Heart left ventricle (tissue), 16 donors: ENCODE measurements at regions of chr11 and their contacts with region 1.

Region 1: GRCh38 chr11:132402071-132402684 is 1031.8 kb downstream of the NTM start:
- DNase-seq: peak in 4 of 5 donors; percentile 16 to 52 (median 35)
- ATAC-seq: peak; percentile 77 to 93 (median 86)
- H3K4me3 ChIP-seq: no peak overlapping the region
- H3K27ac ChIP-seq: no peak overlapping the region
- H3K4me1 ChIP-seq: no peaks in the 10 kb centered on the region
- H3K27me3 ChIP-seq: peaks cover 0 to 28% (median 0%) of the 10 kb centered on the region in 9 donors
- CTCF ChIP-seq: peak in 11 of 12 donors; percentile 27 to 59 (median 45)
- POLR2A ChIP-seq: no peak

Region 2: GRCh38 chr11:132114185-132114584 is 288.0 kb before region 1 on chr11:
- intact Hi-C with region 1: loop called in 8 of 10 experiments (anchors 1 to 10 kb)
- DNase-seq: peak in 3 of 5 donors; percentile 35 to 52 (median 41)
- ATAC-seq: peak; percentile 44 to 70 (median 66)
- H3K4me3 ChIP-seq: no peak overlapping the region
- H3K27ac ChIP-seq: no peak overlapping the region
- H3K4me1 ChIP-seq: peaks cover 0 to 17% (median 0%) of the 10 kb centered on the region in 12 donors
- H3K27me3 ChIP-seq: peaks cover 0 to 9% (median 0%) of the 10 kb centered on the region in 9 donors
- CTCF ChIP-seq: peak; percentile 25 to 57 (median 45)
- POLR2A ChIP-seq: no peak

Region 3: DNA sequence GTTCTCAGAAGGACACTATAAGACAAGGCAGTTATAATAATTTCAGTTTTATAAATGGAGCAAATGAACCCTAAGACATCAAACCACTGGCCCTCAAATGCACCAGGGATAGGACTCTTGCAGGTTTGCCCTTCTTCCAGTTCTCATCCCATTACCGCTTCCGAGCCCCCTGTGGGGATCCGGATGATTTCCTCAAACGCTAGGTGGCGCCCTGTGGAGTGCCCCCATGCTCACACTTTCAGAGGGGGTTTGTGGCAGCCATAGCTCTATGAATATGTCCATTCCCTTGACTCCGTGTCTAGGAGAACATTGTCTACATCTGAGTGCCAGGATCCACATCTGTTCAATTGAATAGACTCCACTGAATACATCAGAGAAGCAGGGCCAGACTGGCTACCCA is 215.5 kb before region 1 on chr11:
- intact Hi-C with region 1: loop called in 1 of 10 experiments (anchors 10 kb)
- DNase-seq: no peak
- ATAC-seq: no peak
- H3K4me3 ChIP-seq: no peak overlapping the region
- H3K27ac ChIP-seq: no peak overlapping the region
- H3K4me1 ChIP-seq: no peaks in the 10 kb centered on the region
- H3K27me3 ChIP-seq: no peaks in the 10 kb centered on the region
- CTCF ChIP-seq: peak in 8 of 12 donors; percentile 7 to 33 (median 18)
- POLR2A ChIP-seq: no peak

Region 4: DNA sequence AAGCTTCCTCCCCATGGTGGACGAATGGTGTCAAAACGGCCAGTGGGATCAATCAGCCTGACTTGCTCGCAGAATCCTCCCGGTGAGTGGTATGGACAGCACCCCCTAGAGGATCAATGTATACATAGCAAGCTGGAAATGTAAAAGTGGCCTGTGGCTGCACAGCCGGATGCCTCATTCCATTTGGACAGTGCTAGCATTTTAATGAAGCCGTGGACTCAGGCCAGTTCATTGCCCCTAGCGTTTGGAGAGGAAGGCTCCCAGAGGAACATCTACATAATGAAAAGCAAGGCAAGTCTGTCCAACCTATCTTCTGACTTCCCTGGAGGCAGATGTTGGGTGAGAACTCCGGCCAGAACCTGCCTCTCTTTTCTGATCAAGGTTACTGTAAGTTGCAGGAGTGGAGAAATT is 89.5 kb before region 1 on chr11:
- intact Hi-C with region 1: loop called in 1 of 10 experiments (anchors 5 kb)
- DNase-seq: no peak
- ATAC-seq: peak in 2 of 4 donors; percentile 48 to 52
- H3K4me3 ChIP-seq: no peak overlapping the region
- H3K27ac ChIP-seq: no peak overlapping the region
- H3K4me1 ChIP-seq: peaks cover 0 to 7% (median 0%) of the 10 kb centered on the region in 12 donors
- H3K27me3 ChIP-seq: no peaks in the 10 kb centered on the region
- CTCF ChIP-seq: peak; percentile 39 to 67 (median 56)
- POLR2A ChIP-seq: no peak

Region 5: GRCh38 chr11:132504501-132505041 is 102.4 kb after region 1 on chr11:
- intact Hi-C with region 1: no loop called
- DNase-seq: no peak
- ATAC-seq: no peak
- H3K4me3 ChIP-seq: no peak overlapping the region
- H3K27ac ChIP-seq: no peak overlapping the region
- H3K4me1 ChIP-seq: no peaks in the 10 kb centered on the region
- H3K27me3 ChIP-seq: peaks cover 0 to 6% (median 0%) of the 10 kb centered on the region in 9 donors
- CTCF ChIP-seq: no peak
- POLR2A ChIP-seq: no peak